ENCODE measurements at regions of chr4 and their contacts with region 1.

Region 1: DNA sequence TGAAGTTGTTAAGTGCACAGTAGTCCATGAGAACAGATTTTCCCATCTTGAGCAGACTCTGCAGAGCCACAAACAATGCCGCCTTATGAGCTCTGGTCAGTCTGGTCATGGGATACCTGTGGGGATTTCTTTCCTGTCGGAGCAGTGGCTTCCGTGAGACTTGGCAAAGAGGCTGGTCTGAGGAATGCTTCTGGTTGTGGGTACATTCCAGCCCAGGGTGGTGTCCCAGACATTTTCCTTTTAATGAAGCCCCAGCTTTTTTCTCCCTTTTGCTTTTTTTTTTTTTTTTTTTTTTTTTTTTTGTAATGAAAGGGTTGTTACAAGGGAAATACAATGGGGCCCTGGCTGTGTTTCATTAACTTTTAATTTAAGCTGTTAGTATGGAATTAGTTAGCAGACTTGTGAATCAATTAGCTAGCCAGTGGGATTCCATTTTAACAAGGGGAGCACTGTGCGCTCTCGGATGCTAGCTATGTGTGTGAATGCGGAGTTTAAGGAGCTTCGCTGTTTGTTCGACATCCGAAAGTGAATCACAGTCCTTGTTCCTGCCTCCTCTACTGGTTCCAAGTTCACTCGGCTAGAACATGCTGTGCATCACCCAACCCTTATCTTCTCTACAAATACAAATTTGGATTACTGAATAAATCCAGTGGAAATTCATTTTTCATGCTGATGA is 225.1 kb downstream of the CBR4 start:
- DNase-seq: peak; percentile 38
- H3K4me3 Mint-ChIP-seq: peak overlapping the region; percentile 33
- H3K27ac Mint-ChIP-seq: peak overlapping the region; percentile 28
- H3K4me1 Mint-ChIP-seq: peaks cover 18% of the 10 kb centered on the region
- H3K27me3 Mint-ChIP-seq: no peaks in the 10 kb centered on the region
- CTCF ChIP-seq: no peak

Region 2: GRCh38 chr4:168717847-168718246 is 67.1 kb before region 1 on chr4:
- CTCF ChIA-PET with region 1: interaction called, 10 read pairs
- POLR2A ChIA-PET with region 1: interaction called, 3 read pairs
- intact Hi-C with region 1: no loop called
- DNase-seq: peak; percentile 65
- H3K4me3 Mint-ChIP-seq: peak overlapping the region; percentile 4
- H3K27ac Mint-ChIP-seq: peak overlapping the region; percentile 77
- H3K4me1 Mint-ChIP-seq: peaks cover 36% of the 10 kb centered on the region
- H3K27me3 Mint-ChIP-seq: no peaks in the 10 kb centered on the region
- CTCF ChIP-seq: no peak